ENCODE measurements at regions of chr15 and their contacts with region 1.

Region 1: GRCh38 chr15:85543741-85544155 is 163.3 kb downstream of the AKAP13 start:
- DNase-seq: no peak
- ATAC-seq: peak; percentile 40
- H3K4me3 Mint-ChIP-seq: peak overlapping the region; percentile 39
- H3K27ac Mint-ChIP-seq: peak overlapping the region; percentile 82
- H3K4me1 Mint-ChIP-seq: peaks cover 72% of the 10 kb centered on the region
- H3K27me3 Mint-ChIP-seq: no peaks in the 10 kb centered on the region
- CTCF ChIP-seq: no peak

Region 2: GRCh38 chr15:85386261-85386660 is 157.5 kb before region 1 on chr15:
- CTCF ChIA-PET with region 1: no interaction called
- POLR2A ChIA-PET with region 1: no interaction called
- intact Hi-C with region 1: no loop called
- DNase-seq: no peak
- ATAC-seq: no peak
- H3K4me3 Mint-ChIP-seq: no peak overlapping the region
- H3K27ac Mint-ChIP-seq: no peak overlapping the region
- H3K4me1 Mint-ChIP-seq: peaks cover 48% of the 10 kb centered on the region
- H3K27me3 Mint-ChIP-seq: no peaks in the 10 kb centered on the region
- CTCF ChIP-seq: no peak

Region 3: DNA sequence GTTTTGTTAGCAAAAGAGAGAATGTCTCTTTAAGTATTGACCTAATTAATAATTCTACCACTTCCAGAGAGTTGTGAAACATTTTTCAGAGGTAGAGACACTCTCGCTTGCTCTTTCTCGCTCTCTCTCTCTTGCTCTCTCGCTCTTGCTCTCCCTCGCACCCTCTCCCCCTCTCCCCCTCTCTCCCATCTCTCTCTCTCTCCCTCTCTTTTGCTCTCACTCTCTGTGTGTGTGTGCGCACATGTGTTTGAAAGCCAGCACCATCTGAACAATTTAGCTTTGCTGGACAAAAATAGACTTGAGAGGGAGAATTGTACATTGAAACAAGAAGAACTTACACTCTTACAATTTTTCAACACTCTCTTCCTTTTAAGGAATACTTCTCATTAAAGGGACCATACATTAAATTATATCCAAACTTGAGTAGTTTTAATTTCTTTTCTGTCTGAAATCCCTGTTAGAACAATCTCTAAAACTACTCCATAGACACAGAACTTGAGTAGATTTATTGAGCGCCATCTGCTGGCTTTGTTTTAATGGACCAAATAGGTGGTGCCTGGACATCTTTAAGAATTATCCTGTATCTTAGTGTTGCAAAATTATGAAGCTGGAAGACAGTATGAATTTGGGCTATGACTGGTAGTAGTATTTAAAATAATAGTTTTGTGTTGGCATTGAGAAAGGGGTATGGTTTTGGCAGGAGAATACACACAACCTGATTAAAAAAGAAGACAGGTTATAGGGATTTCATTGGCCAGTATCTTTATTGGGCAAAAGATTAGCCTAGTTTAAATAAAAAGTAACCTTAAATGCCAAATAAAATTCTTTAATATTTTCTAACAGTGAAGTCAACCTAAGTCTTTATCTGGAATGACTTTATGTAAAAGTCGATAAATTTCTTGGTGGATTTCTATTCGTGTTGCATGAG is 38.7 kb before region 1 on chr15:
- CTCF ChIA-PET with region 1: interaction called, 5 read pairs
- POLR2A ChIA-PET with region 1: no interaction called
- intact Hi-C with region 1: loop called (anchors 5 kb)
- DNase-seq: no peak
- ATAC-seq: peak; percentile 56
- H3K4me3 Mint-ChIP-seq: no peak overlapping the region
- H3K27ac Mint-ChIP-seq: no peak overlapping the region
- H3K4me1 Mint-ChIP-seq: peaks cover 49% of the 10 kb centered on the region
- H3K27me3 Mint-ChIP-seq: no peaks in the 10 kb centered on the region
- CTCF ChIP-seq: peak; percentile 60

Region 4: GRCh38 chr15:85554852-85555521 is 11.2 kb after region 1 on chr15:
- CTCF ChIA-PET with region 1: interaction called, 4 read pairs
- POLR2A ChIA-PET with region 1: interaction called, 8 read pairs
- intact Hi-C with region 1: loop called (anchors 1 kb)
- DNase-seq: no peak
- ATAC-seq: peak; percentile 78
- H3K4me3 Mint-ChIP-seq: peak overlapping the region; percentile 42
- H3K27ac Mint-ChIP-seq: peak overlapping the region; percentile 62
- H3K4me1 Mint-ChIP-seq: peaks cover 40% of the 10 kb centered on the region
- H3K27me3 Mint-ChIP-seq: no peaks in the 10 kb centered on the region
- CTCF ChIP-seq: no peak

Region 5: DNA sequence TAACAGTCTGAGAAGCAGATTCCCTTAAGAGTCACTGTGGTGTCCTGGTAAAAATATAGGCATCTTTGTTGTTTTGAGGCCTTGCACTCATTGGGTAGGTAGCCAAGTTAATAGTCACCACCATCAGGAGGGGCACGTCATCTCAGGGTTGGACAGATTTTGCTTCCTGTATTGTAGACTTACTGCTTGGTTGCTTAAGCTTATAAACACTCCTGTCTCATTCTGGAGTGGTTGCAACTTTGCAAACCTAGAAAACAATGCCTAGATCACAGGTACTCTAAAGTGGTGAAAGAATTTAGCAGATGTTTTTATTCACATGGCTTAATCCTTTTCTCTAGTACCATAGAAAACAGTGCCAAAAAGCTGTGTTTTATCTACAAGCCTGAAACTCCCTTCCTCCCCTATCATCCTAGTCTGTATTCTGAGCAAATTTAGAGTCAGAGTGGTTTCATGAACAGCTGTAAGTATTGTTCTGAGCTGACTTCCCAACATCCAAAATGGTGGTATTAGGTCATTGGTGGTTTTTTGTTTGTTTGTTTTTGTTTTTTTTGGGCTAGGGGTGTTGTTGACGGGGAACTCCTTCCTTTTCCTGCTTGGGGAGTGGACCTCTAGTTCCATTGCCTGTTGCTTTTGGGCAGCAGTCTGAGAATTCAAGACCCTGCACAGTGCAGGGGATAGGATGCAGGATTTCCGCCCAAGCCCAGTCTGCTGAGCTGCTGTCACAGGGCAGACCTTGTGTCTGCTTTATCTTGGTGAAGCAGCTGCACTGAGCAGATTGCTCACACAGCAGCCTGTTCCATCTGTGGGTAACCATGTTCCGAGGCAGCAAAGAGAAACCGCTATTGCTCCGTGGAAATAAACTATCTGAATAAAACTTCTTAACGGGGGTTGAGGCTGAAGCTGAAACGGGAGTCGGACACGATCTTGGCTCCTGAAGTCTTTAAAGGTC is 38.7 kb after region 1 on chr15:
- CTCF ChIA-PET with region 1: interaction called, 6 read pairs
- POLR2A ChIA-PET with region 1: interaction called, 15 read pairs
- intact Hi-C with region 1: loop called (anchors 1 kb)
- DNase-seq: no peak
- ATAC-seq: peak; percentile 59
- H3K4me3 Mint-ChIP-seq: peak overlapping the region; percentile 83
- H3K27ac Mint-ChIP-seq: peak overlapping the region; percentile 90
- H3K4me1 Mint-ChIP-seq: peaks cover 76% of the 10 kb centered on the region
- H3K27me3 Mint-ChIP-seq: no peaks in the 10 kb centered on the region
- CTCF ChIP-seq: no peak

Region 6: DNA sequence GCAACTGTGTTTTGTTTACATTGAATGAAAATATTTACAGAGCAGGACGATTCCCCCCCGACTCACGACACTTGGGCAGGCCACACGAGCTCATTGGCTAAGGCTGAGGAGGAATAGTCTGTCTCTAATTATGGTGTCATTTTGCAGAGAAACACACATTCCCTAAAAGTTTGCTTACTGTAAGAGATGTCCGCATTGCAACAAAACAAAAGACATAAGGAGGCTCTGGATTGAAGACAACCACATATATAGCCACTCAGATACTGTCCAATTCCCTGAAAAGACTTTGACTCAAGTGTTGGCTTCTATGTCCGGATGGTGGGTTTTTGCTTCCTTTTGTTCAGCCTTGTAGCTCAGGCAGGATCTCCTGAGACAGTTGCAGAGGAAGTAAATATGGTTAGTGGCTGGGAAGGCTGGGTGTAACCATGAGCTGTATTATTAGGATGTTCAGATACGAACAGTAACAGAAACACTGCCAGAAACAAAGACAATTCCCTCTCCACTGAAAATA is 80.6 kb after region 1 on chr15:
- CTCF ChIA-PET with region 1: no interaction called
- POLR2A ChIA-PET with region 1: no interaction called
- intact Hi-C with region 1: loop called (anchors 5 kb)
- DNase-seq: no peak
- ATAC-seq: no peak
- H3K4me3 Mint-ChIP-seq: peak overlapping the region; percentile 36
- H3K27ac Mint-ChIP-seq: peak overlapping the region; percentile 1
- H3K4me1 Mint-ChIP-seq: peaks cover 55% of the 10 kb centered on the region
- H3K27me3 Mint-ChIP-seq: no peaks in the 10 kb centered on the region
- CTCF ChIP-seq: no peak

Region 7: GRCh38 chr15:85702321-85703101 is 158.8 kb after region 1 on chr15:
- CTCF ChIA-PET with region 1: no interaction called
- POLR2A ChIA-PET with region 1: no interaction called
- intact Hi-C with region 1: loop called (anchors 5 kb)
- DNase-seq: no peak
- ATAC-seq: no peak
- H3K4me3 Mint-ChIP-seq: peak overlapping the region; percentile 61
- H3K27ac Mint-ChIP-seq: peak overlapping the region; percentile 89
- H3K4me1 Mint-ChIP-seq: peaks cover 76% of the 10 kb centered on the region
- H3K27me3 Mint-ChIP-seq: no peaks in the 10 kb centered on the region
- CTCF ChIP-seq: no peak